A549 (cell line): ENCODE measurements at regions of chr13 and their contacts with region 1.

Region 1: GRCh38 chr13:23579072-23579895 is 9.1 kb downstream of the TNFRSF19 start:
- DNase-seq: peak; percentile 34 to 65
- ATAC-seq: peak; percentile 93 to 97
- H3K4me3 ChIP-seq: peak overlapping the region; percentile 67
- H3K27ac ChIP-seq: peak overlapping the region; percentile 78 to 87
- H3K4me1 ChIP-seq: peaks cover 6% of the 10 kb centered on the region; the same call in 1 of the 3 replicates
- CTCF ChIP-seq: no peak; the same call in 2 of the 3 replicates
- EP300 ChIP-seq: no peak
- POLR2A ChIP-seq: peak; percentile 28; the same call in 1 of the 2 replicates
- RAD21 ChIP-seq: no peak

Region 2: DNA sequence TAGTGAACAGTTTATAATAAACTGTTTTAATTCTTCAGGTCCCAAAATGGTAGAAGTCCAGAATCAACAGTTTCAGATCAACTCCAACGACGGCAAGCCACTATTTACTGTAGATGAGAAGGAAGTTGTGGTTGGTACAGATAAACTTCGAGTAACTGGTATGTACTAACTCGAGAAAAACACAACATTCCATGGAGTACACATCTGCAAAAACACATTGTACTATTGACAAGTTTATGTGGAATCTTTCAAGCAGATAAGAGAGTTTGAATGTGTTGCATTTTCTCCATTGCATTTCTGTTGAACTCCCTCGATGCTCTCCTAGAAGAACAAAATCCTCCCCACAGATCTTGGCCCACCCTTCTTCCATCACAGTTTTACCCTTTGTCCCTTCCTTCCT is 300.0 kb before region 1 on chr13:
- CTCF ChIA-PET with region 1: no interaction called
- POLR2A ChIA-PET with region 1: no interaction called
- DNase-seq: no peak
- ATAC-seq: no peak
- H3K4me3 ChIP-seq: no peak overlapping the region
- H3K27ac ChIP-seq: no peak overlapping the region
- H3K4me1 ChIP-seq: no peaks in the 10 kb centered on the region
- CTCF ChIP-seq: no peak
- EP300 ChIP-seq: no peak
- POLR2A ChIP-seq: no peak
- RAD21 ChIP-seq: no peak

Region 3: GRCh38 chr13:23547000-23547590 is 32.2 kb before region 1 on chr13:
- CTCF ChIA-PET with region 1: no interaction called
- POLR2A ChIA-PET with region 1: no interaction called
- DNase-seq: no peak
- ATAC-seq: peak; percentile 45 to 56; a peak in 5 of 6 replicates
- H3K4me3 ChIP-seq: peak overlapping the region; percentile 51
- H3K27ac ChIP-seq: peak overlapping the region; percentile 65 to 81; a peak in 5 of 6 replicates
- H3K4me1 ChIP-seq: no peaks in the 10 kb centered on the region
- CTCF ChIP-seq: no peak
- EP300 ChIP-seq: no peak
- POLR2A ChIP-seq: no peak
- RAD21 ChIP-seq: no peak

Region 4: GRCh38 chr13:23567906-23568460 is 11.3 kb before region 1 on chr13:
- CTCF ChIA-PET with region 1: interaction called, 11 read pairs
- POLR2A ChIA-PET with region 1: no interaction called
- DNase-seq: no peak
- ATAC-seq: no peak
- H3K4me3 ChIP-seq: no peak overlapping the region
- H3K27ac ChIP-seq: no peak overlapping the region
- H3K4me1 ChIP-seq: peaks cover 6% of the 10 kb centered on the region; the same call in 1 of the 3 replicates
- CTCF ChIP-seq: no peak
- EP300 ChIP-seq: no peak
- POLR2A ChIP-seq: no peak
- RAD21 ChIP-seq: no peak

Region 5: DNA sequence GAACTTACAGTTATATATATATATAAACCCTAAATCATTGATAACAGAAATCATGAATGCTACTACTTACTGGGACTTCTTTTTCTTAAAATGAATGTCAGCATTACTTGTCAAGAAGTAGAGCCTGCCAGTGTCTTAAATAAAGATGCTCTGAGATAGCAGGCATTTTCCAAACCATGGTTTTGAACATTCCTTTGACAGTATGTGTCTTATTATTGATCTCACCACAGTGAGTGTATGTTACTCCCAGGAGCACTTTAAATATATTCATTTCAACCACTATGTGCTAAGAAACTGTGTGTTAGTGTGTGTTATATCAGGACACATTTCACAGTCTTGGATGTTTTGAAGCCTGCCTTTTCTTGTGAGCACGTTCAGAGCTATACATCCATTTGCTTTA is 19.1 kb after region 1 on chr13:
- CTCF ChIA-PET with region 1: no interaction called
- POLR2A ChIA-PET with region 1: no interaction called
- DNase-seq: no peak
- ATAC-seq: no peak
- H3K4me3 ChIP-seq: no peak overlapping the region
- H3K27ac ChIP-seq: no peak overlapping the region
- H3K4me1 ChIP-seq: no peaks in the 10 kb centered on the region
- CTCF ChIP-seq: no peak
- EP300 ChIP-seq: no peak
- POLR2A ChIP-seq: no peak
- RAD21 ChIP-seq: no peak

Region 6: GRCh38 chr13:23888658-23889614 is 309.7 kb after region 1 on chr13 and contains the start of gene MIPEP:
- CTCF ChIA-PET with region 1: interaction called, 12 read pairs
- POLR2A ChIA-PET with region 1: interaction called, 3 read pairs
- DNase-seq: peak; percentile 83 to 93
- ATAC-seq: peak; percentile 94 to 96
- H3K4me3 ChIP-seq: peak within 1 kb of the TSS; percentile 82
- H3K27ac ChIP-seq: peak within 1 kb of the TSS; percentile 78 to 94
- H3K4me1 ChIP-seq: peaks cover 6% of the 10 kb centered on the region; the same call in 2 of the 3 replicates
- CTCF ChIP-seq: peak; percentile 54
- EP300 ChIP-seq: no peak
- POLR2A ChIP-seq: peak; percentile 67
- RAD21 ChIP-seq: no peak
- polyA plus RNA-seq, gene MIPEP: 27.5 and 32.8 TPM in 2 replicates